Transverse colon (tissue), 4 donors: ENCODE measurements at regions of chr4 and their contacts with region 1.

Region 1: GRCh38 chr4:139633661-139634060 is 32.0 kb upstream of the MGST2 start:
- DNase-seq: peak; percentile 17
- H3K4me3 ChIP-seq: peak overlapping the region in 1 of 4 donors; percentile 6
- H3K27ac ChIP-seq: no peak overlapping the region
- H3K4me1 ChIP-seq: no peaks in the 10 kb centered on the region
- H3K27me3 ChIP-seq: no peaks in the 10 kb centered on the region
- CTCF ChIP-seq: peak; percentile 24 to 51 (median 42)
- EP300 ChIP-seq: no peak
- POLR2A ChIP-seq: no peak

Region 2: DNA sequence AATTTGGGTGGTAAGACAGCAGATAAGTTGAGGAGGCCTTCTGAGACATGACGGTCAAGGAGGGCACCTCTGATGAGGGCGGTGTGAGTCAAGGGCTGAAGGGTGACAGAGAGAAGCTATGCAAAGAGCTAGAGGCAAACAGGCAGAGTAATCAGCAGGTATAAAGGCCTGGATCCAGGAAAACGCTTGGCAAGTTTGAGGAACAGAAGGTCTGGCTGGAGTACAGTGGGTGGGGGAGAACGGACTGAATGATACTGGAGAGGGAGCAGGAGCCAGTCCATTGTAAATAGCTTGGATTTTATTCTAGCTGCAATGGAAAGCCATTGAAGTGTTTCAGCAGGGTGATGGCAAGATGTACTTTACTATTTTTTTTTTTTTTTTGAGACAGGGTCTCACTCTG is 140.5 kb before region 1 on chr4:
- in situ Hi-C with region 1: loop called in 1 of 4 experiments (anchors 10 kb)
- intact Hi-C with region 1: loop called (anchors 5 kb)
- DNase-seq: no peak
- H3K4me3 ChIP-seq: no peak overlapping the region
- H3K27ac ChIP-seq: no peak overlapping the region
- H3K4me1 ChIP-seq: no peaks in the 10 kb centered on the region
- H3K27me3 ChIP-seq: no peaks in the 10 kb centered on the region
- CTCF ChIP-seq: no peak
- EP300 ChIP-seq: no peak
- POLR2A ChIP-seq: no peak

Region 3: DNA sequence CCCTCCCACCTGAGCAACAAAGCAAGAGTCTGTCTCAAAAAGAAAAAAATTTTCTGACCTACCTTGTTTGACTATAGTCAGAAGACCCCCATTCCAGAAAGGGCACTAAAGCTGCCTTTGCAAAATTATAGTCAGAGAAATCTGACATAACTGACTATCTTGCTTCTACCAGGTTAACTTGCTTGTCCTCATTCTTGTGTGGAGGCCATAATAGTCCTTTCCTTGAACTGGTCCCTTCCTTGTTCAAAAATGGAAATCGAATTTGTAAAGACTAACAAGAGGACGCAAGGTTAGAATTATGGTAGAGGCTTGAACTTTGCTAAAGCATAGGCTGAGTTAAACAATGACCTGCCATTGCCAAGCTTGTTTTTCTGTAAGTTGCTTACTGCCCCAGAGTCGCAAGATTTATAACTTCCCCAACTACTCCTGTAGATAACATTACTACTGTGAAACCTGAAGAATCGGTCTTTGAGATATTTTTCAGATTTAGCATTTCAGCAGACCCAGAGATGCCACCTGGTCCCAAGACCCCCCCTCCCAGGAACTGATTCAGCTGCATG is 134.6 kb before region 1 on chr4:
- in situ Hi-C with region 1: loop called in 1 of 4 experiments (anchors 10 kb)
- intact Hi-C with region 1: loop called (anchors 5 kb)
- DNase-seq: no peak
- H3K4me3 ChIP-seq: no peak overlapping the region
- H3K27ac ChIP-seq: no peak overlapping the region
- H3K4me1 ChIP-seq: no peaks in the 10 kb centered on the region
- H3K27me3 ChIP-seq: no peaks in the 10 kb centered on the region
- CTCF ChIP-seq: no peak
- EP300 ChIP-seq: no peak
- POLR2A ChIP-seq: no peak

Region 4: DNA sequence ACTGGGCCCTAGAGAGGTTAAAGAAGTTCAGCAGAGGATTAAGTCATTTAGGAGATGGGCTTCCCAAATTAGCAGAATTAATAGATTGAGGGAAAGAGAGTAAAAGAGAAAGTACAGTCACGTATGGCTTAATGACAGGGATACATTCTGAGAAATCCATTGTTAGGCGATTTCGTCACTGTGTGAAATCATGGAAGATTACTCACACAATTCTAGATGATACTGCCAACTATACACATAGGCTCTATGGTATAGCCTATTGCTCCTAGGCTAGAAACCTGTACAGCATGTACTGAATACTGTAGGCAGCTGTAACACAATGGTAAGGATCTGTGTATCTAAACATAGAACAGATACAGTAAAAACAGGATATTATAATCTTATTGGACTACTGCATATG is 1319.1 kb after region 1 on chr4:
- in situ Hi-C with region 1: no loop called
- intact Hi-C with region 1: no loop called
- DNase-seq: no peak
- H3K4me3 ChIP-seq: no peak overlapping the region
- H3K27ac ChIP-seq: peak overlapping the region in 1 of 4 donors; percentile 1
- H3K4me1 ChIP-seq: peaks cover 0 to 8% (median 1%) of the 10 kb centered on the region in 4 donors
- H3K27me3 ChIP-seq: no peaks in the 10 kb centered on the region
- CTCF ChIP-seq: no peak
- EP300 ChIP-seq: no peak
- POLR2A ChIP-seq: no peak